AG04450 (cell line): ENCODE measurements at regions of chr2 and their contacts with region 1.

Region 1: DNA sequence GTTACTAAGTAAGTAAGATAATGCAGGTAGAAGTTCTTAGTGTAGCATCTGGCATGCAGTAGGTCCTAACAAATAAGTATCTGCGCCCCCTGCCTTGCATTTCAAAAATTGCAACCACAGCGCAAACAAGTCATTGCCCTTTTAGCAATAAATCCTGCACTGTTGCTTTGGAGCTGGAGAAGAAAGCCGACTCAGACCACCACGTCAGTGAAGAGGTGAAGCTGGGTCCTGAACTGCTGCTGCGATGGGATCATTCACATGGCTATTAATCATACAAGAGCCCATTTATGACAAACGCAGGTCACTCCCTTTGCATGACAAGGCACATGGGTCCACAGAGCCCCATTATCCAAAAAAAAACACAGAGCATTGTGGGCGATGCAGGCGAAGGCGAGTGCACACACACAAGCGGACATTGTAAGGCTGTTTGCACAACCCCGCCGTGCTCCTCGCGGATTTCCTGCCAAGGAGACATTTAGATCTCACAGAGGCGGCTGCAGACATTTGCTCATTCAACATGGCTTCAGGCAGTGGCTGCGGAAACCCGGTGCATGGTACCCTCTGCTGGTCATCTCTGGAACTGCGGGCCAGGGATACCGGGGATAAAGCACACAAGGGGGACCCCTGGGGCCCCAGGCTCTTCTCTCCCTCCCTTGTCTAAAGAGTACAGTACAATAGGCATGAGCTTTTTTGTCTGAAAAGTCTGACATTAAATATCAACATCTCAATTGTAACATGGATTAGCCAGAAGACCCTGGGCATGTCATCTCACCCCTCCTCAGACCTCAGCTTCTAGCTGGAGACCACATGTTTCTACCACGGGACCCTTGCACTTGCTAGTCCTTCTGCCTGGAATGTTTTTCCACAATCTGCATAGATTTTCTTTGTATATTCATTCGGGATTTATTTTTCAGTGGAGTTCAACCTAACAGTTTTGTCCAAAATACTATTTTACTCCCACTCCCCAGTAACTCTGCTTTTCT is 56.7 kb downstream of the CYRIA start:
- DNase-seq: peak; percentile 37
- H3K4me3 ChIP-seq: peak overlapping the region; percentile 54
- H3K27ac ChIP-seq: no peak overlapping the region
- H3K27me3 ChIP-seq: peaks cover 3% of the 10 kb centered on the region
- CTCF ChIP-seq: peak; percentile 99

Region 2: DNA sequence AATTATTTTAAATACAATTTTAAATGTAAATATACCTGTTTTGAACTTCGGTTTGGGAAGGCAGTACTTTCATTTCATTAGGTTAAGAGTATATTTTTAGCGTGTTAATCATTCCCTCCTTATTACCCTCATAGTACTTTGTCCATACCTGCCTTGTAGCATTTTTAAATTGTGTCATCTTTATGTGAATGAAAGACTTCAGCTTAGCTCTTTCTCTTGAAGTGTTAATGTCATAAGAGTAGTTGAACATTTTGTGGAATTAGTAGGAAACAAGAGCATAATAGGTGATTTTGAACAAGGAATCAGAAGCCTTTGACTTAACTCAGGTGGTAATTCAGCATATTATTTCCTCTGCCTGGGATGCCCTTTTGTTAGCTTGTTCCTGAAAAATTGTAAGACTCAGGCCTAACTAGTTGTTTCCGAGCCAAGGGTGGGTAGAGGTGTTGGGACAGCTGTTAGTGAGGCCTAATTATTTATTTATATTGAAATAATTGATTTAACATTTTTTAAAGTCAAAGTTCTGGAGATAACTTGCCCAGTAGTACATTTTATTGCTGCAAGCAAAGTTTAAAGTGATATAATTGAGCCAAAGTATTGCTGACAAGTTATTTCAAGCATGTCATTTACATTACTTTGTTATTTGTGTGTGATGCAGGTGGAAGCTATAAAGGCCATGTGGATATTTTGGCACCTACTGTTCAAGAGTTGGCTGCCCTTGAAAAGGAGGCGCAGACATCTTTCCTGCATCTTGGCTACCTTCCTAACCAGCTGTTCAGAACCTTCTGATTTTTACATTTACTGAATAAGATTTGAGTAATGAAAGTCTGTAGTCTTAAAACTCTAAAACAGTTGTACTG is 978.6 kb before region 1 on chr2:
- CTCF ChIA-PET with region 1: interaction called, 75 read pairs
- POLR2A ChIA-PET with region 1: no interaction called
- DNase-seq: no peak
- H3K4me3 ChIP-seq: no peak overlapping the region
- H3K27ac ChIP-seq: no peak overlapping the region
- H3K27me3 ChIP-seq: no peaks in the 10 kb centered on the region
- CTCF ChIP-seq: no peak

Region 3: GRCh38 chr2:15636972-15637785 is 971.8 kb before region 1 on chr2:
- CTCF ChIA-PET with region 1: interaction called, 75 read pairs
- POLR2A ChIA-PET with region 1: no interaction called
- DNase-seq: peak; percentile 46
- H3K4me3 ChIP-seq: no peak overlapping the region
- H3K27ac ChIP-seq: no peak overlapping the region
- H3K27me3 ChIP-seq: no peaks in the 10 kb centered on the region
- CTCF ChIP-seq: peak; percentile 87

Region 4: DNA sequence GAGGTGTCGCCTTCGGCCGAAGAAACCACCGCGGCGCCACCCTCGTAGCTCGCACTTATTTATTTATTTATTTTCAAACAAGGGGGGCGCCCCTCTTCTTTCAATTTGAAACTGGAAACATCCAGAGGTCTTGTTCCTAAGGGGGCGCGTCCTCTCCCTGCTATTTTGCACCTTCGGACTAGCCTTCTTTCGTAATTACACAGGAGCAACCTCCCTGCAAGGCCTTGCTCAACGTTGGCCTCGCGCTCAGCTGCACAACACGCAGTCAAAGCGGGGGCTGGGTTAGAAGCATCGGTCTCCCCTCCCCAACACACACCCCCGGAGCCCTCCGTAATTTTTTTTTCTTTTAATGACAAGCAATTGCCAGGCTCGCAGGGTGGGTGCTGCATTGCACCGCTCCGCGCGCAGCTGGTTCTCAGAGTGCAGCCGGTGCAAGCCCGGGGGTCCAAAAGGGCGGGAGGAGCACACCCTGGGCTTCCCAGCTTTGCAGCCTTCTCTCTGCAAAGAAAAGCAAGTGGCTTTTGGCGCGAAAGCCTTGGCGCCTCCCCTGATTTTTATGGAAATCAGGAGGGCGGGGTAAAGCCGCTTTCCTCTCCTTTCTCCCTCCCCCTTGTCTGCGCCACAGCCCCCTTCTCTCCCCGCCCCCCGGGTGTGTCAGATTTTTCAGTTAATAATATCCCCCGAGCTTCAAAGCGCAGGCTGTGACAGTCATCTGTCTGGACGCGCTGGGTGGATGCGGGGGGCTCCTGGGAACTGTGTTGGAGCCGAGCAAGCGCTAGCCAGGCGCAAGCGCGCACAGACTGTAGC is 668.9 kb before region 1 on chr2 and contains the start of gene MYCN:
- CTCF ChIA-PET with region 1: interaction called, 14 read pairs
- POLR2A ChIA-PET with region 1: no interaction called
- DNase-seq: no peak
- H3K4me3 ChIP-seq: no peak within 1 kb of the TSS
- H3K27ac ChIP-seq: no peak within 1 kb of the TSS
- H3K27me3 ChIP-seq: peaks cover 40% of the 10 kb centered on the region
- CTCF ChIP-seq: no peak; the same call in 1 of the 2 replicates
- polyA plus RNA-seq, gene MYCN: not detected in 2 replicates

Region 5: DNA sequence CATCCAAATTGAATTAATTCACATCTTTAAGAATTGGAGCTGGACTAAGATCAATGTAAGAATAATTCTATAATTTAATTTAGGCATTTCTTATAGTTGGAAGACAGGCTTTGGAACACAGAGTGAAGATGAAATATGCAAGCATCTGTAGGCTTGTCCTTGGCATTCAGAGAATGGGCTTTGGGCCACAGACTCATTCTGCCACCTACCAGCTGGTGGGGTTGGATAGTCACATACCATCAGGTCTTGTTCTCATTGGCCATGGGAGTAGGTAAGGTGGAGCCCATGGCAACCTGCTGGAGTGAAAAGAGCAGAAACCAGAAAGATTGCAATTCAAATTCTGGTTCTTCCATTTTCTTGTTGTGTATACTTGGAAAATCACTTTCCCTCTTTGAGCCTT is 243.6 kb before region 1 on chr2:
- CTCF ChIA-PET with region 1: no interaction called
- POLR2A ChIA-PET with region 1: no interaction called
- DNase-seq: no peak
- H3K4me3 ChIP-seq: no peak overlapping the region
- H3K27ac ChIP-seq: no peak overlapping the region
- H3K27me3 ChIP-seq: no peaks in the 10 kb centered on the region
- CTCF ChIP-seq: no peak

Region 6: GRCh38 chr2:16400127-16400623 is 208.8 kb before region 1 on chr2:
- CTCF ChIA-PET with region 1: no interaction called
- POLR2A ChIA-PET with region 1: no interaction called
- DNase-seq: no peak
- H3K4me3 ChIP-seq: no peak overlapping the region
- H3K27ac ChIP-seq: no peak overlapping the region
- H3K27me3 ChIP-seq: no peaks in the 10 kb centered on the region
- CTCF ChIP-seq: no peak

Region 7: GRCh38 chr2:16466133-16466820 is 142.7 kb before region 1 on chr2:
- CTCF ChIA-PET with region 1: no interaction called
- POLR2A ChIA-PET with region 1: no interaction called
- DNase-seq: no peak
- H3K4me3 ChIP-seq: no peak overlapping the region
- H3K27ac ChIP-seq: no peak overlapping the region
- H3K27me3 ChIP-seq: no peaks in the 10 kb centered on the region
- CTCF ChIP-seq: no peak

Region 8: GRCh38 chr2:16587601-16588000 is 21.4 kb before region 1 on chr2:
- CTCF ChIA-PET with region 1: interaction called, 16 read pairs
- POLR2A ChIA-PET with region 1: no interaction called
- DNase-seq: no peak
- H3K4me3 ChIP-seq: no peak overlapping the region
- H3K27ac ChIP-seq: no peak overlapping the region
- H3K27me3 ChIP-seq: no peaks in the 10 kb centered on the region
- CTCF ChIP-seq: no peak